Right cardiac atrium (tissue), 5 donors: ENCODE measurements at regions of chr3 and their contacts with region 1.

Region 1: DNA sequence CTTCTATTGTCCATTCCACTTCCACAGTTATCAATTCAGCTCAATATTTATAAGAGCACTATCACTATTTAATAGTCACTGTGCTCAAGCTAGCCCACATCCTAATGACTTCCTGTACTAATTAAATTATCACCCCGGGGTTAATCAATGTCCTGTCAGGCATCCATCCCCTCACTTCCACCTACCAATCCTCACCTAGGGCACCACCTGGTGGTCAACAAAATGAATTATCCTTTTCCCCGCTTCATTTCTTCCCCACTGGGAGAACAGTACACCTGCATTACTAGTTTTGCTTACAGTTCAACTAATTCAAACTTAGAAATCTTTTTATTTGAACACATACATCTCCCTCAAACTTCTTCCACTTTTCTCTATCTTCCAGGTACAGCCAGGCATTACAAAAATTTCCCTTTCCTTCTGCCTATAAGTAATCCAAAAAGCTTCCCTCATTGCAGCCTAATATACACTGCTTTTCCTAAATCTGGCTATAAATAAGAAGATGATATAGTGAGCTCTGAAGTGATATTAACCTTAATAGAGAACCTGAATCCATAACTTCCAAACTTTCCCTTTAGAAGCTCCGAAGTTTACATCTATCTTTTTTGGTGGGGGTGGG is 68.5 kb downstream of the TMCC1 start:
- DNase-seq: peak in 1 of 3 donors; percentile 20
- ATAC-seq: peak in 1 of 2 donors; percentile 45
- H3K4me3 ChIP-seq: no peak overlapping the region
- H3K27ac ChIP-seq: no peak overlapping the region
- H3K4me1 ChIP-seq: no peaks in the 10 kb centered on the region
- H3K27me3 ChIP-seq: no peaks in the 10 kb centered on the region

Region 2: GRCh38 chr3:129490242-129491045 is 334.6 kb before region 1 on chr3:
- intact Hi-C with region 1: loop called (anchors 5 to 10 kb)
- DNase-seq: peak; percentile 84 to 92 (median 92)
- ATAC-seq: peak; percentile 88 to 91
- H3K4me3 ChIP-seq: no peak overlapping the region
- H3K27ac ChIP-seq: peak overlapping the region; percentile 84
- H3K4me1 ChIP-seq: peaks cover 9% of the 10 kb centered on the region
- H3K27me3 ChIP-seq: no peaks in the 10 kb centered on the region

Region 3: DNA sequence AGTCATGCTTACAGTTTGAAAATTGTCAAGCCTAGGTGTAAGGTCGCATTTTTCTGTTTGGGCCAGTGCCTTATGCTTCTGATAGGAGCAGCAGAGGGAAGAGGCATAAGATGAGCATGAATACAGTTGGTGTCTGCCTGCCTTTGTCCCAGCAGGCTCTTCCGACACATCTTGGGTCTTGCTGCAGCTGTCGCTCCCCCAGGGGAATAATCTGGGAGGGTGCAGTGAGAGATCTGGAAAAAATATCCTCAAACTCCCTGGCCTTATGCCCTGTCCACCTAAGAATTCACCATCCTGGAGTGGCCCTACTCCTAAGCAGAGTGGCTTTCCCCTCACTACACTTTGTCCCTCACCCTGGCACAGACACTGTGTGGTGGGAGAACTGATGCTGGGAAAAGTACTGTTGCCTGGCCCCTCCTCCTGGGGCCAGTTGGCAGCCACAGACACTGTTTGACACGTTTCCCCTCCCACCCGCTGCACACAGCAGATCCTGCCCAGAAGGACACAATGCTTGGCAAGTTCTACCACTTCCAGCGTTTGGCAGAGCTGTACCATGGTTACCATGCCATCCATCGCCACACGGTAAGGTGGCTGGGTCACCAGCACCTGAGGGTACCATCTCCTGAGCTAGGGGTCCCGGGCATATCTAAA is 317.7 kb before region 1 on chr3:
- intact Hi-C with region 1: no loop called
- DNase-seq: peak in 2 of 3 donors; percentile 68 to 73
- ATAC-seq: peak; percentile 75 to 79
- H3K4me3 ChIP-seq: no peak overlapping the region
- H3K27ac ChIP-seq: peak overlapping the region; percentile 43
- H3K4me1 ChIP-seq: peaks cover 24% of the 10 kb centered on the region
- H3K27me3 ChIP-seq: no peaks in the 10 kb centered on the region

Region 4: DNA sequence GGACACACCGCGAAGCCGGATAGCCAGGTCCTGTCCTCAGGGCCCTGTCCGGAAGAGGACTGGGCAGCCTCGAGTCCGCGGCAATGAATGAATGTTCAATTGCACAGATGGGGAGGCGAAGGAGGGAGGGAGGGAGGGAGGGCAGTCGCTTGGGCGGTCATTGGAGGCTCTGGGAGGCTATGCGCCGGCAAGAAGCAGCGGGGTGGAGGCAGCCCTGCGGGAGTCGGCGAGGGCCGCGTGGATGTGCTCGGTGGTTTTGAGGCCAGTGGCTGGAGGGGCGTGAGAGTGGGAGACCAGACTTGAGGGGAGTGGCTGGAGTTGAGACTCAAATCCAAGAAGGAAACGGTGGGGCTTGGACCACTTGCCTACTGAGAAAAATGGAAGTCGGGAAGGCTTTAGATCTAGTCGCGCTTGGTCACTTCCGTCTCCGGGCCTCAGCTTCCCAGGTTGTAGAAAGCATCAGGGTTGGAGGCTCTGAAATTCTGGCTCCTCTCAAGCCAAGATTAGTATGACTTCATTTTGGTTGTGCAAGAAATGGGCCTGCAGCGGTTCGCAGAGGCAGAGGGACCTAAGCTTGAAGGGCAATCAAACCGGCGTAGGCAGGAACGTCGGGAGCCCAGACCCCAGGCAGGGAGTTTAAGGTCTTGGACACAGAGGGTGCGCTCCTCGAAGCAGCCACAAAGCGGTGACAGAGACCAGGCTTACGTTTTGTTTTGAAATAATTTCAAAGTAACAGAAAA is 197.4 kb before region 1 on chr3:
- intact Hi-C with region 1: loop called in 2 of 4 experiments (anchors 5 kb)
- DNase-seq: peak; percentile 82 to 88 (median 88)
- ATAC-seq: peak; percentile 39 to 47
- H3K4me3 ChIP-seq: peak overlapping the region; percentile 48
- H3K27ac ChIP-seq: peak overlapping the region; percentile 97
- H3K4me1 ChIP-seq: peaks cover 20% of the 10 kb centered on the region
- H3K27me3 ChIP-seq: no peaks in the 10 kb centered on the region

Region 5: DNA sequence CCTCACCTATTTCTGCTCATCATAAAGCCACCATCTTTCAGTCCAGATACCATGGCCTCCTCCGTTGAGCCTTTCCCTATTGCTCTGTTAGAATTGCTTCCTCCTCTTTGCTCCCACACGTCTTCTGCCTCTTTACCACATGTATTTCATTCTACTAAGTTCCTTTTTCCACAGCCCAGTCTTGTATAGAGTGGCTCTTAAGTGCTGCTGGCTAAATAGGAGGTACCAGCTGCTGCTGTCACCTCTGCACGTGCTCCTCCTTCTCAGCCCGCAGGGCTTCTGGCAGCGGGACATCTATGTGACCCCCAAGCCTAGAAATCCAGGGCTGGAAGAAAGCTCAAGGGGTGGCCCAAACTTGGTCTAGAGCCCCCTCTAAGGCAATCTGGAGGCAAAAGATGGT is 179.7 kb before region 1 on chr3:
- intact Hi-C with region 1: loop called (anchors 2 to 5 kb)
- DNase-seq: no peak
- ATAC-seq: peak in 1 of 2 donors; percentile 29
- H3K4me3 ChIP-seq: no peak overlapping the region
- H3K27ac ChIP-seq: no peak overlapping the region
- H3K4me1 ChIP-seq: no peaks in the 10 kb centered on the region
- H3K27me3 ChIP-seq: no peaks in the 10 kb centered on the region

Region 6: DNA sequence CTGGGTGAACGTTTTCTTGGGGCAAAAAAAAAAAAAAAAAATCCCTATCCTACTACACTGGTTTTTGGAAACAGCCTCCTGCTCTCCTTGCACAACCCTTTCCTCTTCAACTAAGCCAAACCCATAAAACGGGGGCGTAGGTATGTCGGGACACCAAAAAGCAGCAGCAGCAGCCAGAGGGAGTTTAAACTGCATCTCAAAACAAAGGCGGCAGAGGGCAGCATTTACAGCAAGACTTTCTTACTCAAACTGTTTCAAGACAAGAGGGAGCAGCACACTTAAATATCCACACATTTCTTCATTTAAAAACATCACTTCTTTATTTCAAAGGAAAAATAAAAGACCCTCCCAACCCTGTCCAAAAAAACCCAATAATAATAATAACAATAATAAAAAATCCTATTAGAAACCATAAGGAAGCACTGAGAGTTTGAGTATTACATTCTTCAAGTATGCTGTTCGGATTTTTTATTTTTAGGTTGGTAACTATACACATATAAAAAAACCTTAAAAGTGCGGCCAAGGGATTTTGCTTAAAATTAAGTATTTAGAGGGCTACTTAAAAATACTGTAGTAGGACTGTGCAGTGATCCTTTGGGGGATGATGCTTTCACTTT is 174.7 kb before region 1 on chr3:
- intact Hi-C with region 1: loop called (anchors 2 to 5 kb)
- DNase-seq: peak; percentile 67 to 78 (median 69)
- ATAC-seq: peak; percentile 65 to 76
- H3K4me3 ChIP-seq: no peak overlapping the region
- H3K27ac ChIP-seq: no peak overlapping the region
- H3K4me1 ChIP-seq: no peaks in the 10 kb centered on the region
- H3K27me3 ChIP-seq: no peaks in the 10 kb centered on the region

Region 7: DNA sequence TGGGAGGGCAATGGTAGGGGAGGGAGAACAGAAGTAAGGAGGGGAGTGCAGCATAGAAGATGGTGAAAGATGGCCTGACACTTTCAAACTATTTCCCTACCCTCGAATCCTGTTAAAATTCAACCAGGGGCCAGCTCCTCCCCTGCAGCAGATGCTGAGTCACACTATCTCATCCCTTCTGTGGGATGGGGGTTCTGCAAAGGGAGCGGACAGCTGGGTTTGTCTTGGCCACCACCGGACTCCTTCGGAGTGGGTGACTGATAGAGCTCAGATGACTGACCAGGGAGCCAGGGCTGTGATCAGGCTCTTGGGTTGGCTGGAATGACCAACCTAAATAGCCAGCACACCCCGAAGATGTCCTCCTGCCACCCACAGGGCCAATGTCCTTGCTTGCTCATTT is 102.0 kb after region 1 on chr3:
- intact Hi-C with region 1: loop called in 1 of 4 experiments (anchors 10 kb)
- DNase-seq: no peak
- ATAC-seq: peak in 1 of 2 donors; percentile 26
- H3K4me3 ChIP-seq: no peak overlapping the region
- H3K27ac ChIP-seq: no peak overlapping the region
- H3K4me1 ChIP-seq: no peaks in the 10 kb centered on the region
- H3K27me3 ChIP-seq: no peaks in the 10 kb centered on the region